SK-N-SH (cell line): ENCODE measurements at regions of chr1 and their contacts with region 1.

Region 1: GRCh38 chr1:89762779-89763648 is 57.8 kb upstream of the LRRC8D start:
- DNase-seq: peak; percentile 90
- H3K4me3 ChIP-seq: peak overlapping the region; percentile 52 to 60
- H3K27ac ChIP-seq: peak overlapping the region in 1 of 2 experiments; percentile 86; a peak in 2 of 4 replicates
- H3K4me1 ChIP-seq: peaks cover 5 to 22% of the 10 kb centered on the region in 2 experiments; a peak in 3 of 4 replicates
- H3K27me3 ChIP-seq: no peaks in the 10 kb centered on the region
- CTCF ChIP-seq: peak; percentile 97
- EP300 ChIP-seq: peak in 1 of 2 experiments; percentile 48; a peak in 2 of 4 replicates
- RAD21 ChIP-seq: peak; percentile 91

Region 2: GRCh38 chr1:89483010-89483756 is 279.8 kb before region 1 on chr1:
- CTCF ChIA-PET with region 1: interaction called, 64 read pairs
- POLR2A ChIA-PET with region 1: no interaction called
- DNase-seq: peak; percentile 65
- H3K4me3 ChIP-seq: no peak overlapping the region
- H3K27ac ChIP-seq: no peak overlapping the region
- H3K4me1 ChIP-seq: peaks cover 0 to 5% of the 10 kb centered on the region in 2 experiments; a peak in 1 of 4 replicates
- H3K27me3 ChIP-seq: no peaks in the 10 kb centered on the region
- CTCF ChIP-seq: peak; percentile 82
- EP300 ChIP-seq: no peak
- RAD21 ChIP-seq: peak; percentile 88

Region 3: DNA sequence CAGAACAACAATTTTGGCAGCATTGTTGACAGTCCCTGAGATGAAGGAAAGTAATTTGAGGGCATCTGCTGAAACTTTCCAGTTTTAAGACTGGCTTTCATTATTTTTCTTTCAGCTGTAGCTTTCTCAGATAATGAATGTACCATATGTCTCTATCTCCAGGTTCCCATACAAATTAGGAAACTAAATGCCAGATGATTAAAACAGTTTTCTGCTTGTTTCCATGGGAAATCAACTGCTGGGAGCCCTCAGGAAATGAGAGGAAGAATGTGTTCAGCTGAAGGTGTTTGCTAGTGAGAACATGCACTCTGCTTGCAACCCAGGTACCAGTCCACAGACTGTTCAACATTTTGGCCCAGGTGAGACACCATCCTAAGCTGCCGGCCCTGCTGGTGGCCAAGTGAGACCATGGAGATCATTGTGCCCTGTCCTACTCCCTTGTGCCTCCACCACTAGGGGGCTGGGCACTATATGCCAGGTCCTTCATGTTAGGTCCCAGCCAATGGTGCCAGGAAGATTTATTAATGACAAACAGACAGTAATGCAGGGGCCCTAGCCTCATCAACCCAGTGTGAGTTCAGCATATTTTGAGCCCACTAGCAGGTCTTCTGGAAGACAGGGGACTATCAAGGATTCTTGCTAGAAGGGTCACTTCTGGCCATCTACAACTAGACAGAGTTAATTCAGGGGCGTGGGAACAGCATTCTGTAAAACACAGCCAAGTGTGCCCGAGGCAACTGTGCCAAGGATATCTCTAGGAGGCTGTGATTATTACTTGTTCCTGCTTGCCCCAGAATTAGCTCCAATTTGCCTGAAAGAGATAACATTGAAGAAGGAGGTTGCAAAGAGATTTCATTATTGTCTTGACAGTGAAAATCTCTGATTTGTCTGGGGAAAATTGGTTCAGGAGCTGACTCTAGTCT is 147.1 kb before region 1 on chr1:
- CTCF ChIA-PET with region 1: interaction called, 25 read pairs
- POLR2A ChIA-PET with region 1: no interaction called
- DNase-seq: peak; percentile 63
- H3K4me3 ChIP-seq: no peak overlapping the region
- H3K27ac ChIP-seq: peak overlapping the region in 1 of 2 experiments; percentile 77; a peak in 2 of 4 replicates
- H3K4me1 ChIP-seq: peaks cover 0 to 13% of the 10 kb centered on the region in 2 experiments; a peak in 1 of 4 replicates
- H3K27me3 ChIP-seq: no peaks in the 10 kb centered on the region
- CTCF ChIP-seq: peak; percentile 49
- EP300 ChIP-seq: no peak; a peak in 1 of 4 replicates
- RAD21 ChIP-seq: peak; percentile 17

Region 4: DNA sequence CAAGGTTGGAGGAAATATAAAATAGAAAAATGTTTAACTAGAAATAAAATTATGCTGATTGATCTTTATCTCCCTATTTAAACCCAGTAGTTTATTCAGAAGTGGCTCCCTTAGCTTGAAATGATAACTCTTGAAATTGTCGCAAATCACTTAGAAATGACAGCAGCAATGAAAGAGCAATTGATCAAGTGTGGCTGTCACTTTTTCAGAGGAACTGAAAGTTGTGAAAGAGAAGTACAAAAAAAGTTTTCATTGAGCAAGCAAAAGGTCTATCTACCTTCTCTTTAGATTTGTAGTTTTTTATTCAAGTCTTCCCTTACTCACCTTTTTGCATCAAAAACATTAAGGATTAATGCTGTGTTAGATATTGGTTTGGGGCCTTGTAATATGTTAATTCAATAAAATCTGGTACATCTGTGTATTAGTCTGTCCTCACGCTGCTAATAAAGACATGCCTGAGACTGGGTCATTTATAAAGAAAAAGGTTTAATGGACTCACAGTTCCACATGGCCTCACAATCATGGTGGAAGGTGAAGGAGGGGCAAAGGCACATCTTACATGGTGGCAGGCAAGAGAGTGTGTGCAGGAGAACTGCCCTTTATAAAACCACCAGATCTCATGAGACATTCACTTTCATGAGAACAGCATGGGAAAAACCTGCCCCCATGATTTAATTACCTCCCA is 81.8 kb before region 1 on chr1:
- CTCF ChIA-PET with region 1: no interaction called
- POLR2A ChIA-PET with region 1: no interaction called
- DNase-seq: no peak
- H3K4me3 ChIP-seq: no peak overlapping the region
- H3K27ac ChIP-seq: no peak overlapping the region
- H3K4me1 ChIP-seq: no peaks in the 10 kb centered on the region
- H3K27me3 ChIP-seq: no peaks in the 10 kb centered on the region
- CTCF ChIP-seq: no peak
- EP300 ChIP-seq: no peak
- RAD21 ChIP-seq: no peak

Region 5: DNA sequence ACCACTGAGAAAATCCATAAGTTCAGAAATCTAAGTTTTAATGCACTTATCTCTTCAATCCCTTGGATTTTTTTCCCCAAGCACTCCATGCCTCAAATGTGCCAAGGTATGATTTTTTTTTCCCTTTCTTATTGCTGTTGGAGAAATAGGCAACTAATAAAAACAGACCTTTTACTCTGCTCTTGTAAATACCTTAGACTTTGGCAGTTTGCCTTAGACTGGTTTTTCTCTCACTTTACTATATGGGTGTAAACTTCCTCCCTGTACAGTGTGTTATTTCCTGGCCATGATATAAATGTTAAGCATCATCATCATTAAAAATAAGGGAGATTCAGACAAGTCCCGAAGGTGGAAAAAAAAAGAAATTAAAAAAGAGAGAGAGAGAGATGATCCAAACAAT is 64.4 kb before region 1 on chr1:
- CTCF ChIA-PET with region 1: interaction called, 41 read pairs
- POLR2A ChIA-PET with region 1: interaction called, 5 read pairs
- DNase-seq: no peak
- H3K4me3 ChIP-seq: no peak overlapping the region
- H3K27ac ChIP-seq: peak overlapping the region in 1 of 2 experiments; percentile 87; a peak in 2 of 4 replicates
- H3K4me1 ChIP-seq: peaks cover 0 to 29% of the 10 kb centered on the region in 2 experiments; a peak in 2 of 4 replicates
- H3K27me3 ChIP-seq: no peaks in the 10 kb centered on the region
- CTCF ChIP-seq: no peak
- EP300 ChIP-seq: no peak
- RAD21 ChIP-seq: no peak

Region 6: GRCh38 chr1:89719502-89720306 is 43.3 kb before region 1 on chr1:
- CTCF ChIA-PET with region 1: interaction called, 24 read pairs
- POLR2A ChIA-PET with region 1: no interaction called
- DNase-seq: peak; percentile 41
- H3K4me3 ChIP-seq: no peak overlapping the region
- H3K27ac ChIP-seq: peak overlapping the region; percentile 4 to 58; a peak in 3 of 4 replicates
- H3K4me1 ChIP-seq: peaks cover 27 to 41% of the 10 kb centered on the region in 2 experiments
- H3K27me3 ChIP-seq: no peaks in the 10 kb centered on the region
- CTCF ChIP-seq: no peak
- EP300 ChIP-seq: 0 out of 4 replicates have a peak, but pooled peaks of 1 of the 2 experiments have one; percentile 26
- RAD21 ChIP-seq: peak; percentile 24

Region 7: GRCh38 chr1:89780721-89781120 is 17.7 kb after region 1 on chr1:
- CTCF ChIA-PET with region 1: interaction called, 22 read pairs
- POLR2A ChIA-PET with region 1: no interaction called
- DNase-seq: peak; percentile 31
- H3K4me3 ChIP-seq: no peak overlapping the region
- H3K27ac ChIP-seq: no peak overlapping the region
- H3K4me1 ChIP-seq: no peaks in the 10 kb centered on the region; a peak in 1 of 4 replicates
- H3K27me3 ChIP-seq: no peaks in the 10 kb centered on the region
- CTCF ChIP-seq: peak; percentile 63
- EP300 ChIP-seq: no peak
- RAD21 ChIP-seq: peak; percentile 70